Left cardiac atrium (tissue), 4 donors: ENCODE measurements at regions of chr13 and their contacts with region 1.

Region 1: GRCh38 chr13:32581177-32581786 is 5.0 kb upstream of the PDS5B start:
- DNase-seq: no peak
- ATAC-seq: no peak

Region 2: DNA sequence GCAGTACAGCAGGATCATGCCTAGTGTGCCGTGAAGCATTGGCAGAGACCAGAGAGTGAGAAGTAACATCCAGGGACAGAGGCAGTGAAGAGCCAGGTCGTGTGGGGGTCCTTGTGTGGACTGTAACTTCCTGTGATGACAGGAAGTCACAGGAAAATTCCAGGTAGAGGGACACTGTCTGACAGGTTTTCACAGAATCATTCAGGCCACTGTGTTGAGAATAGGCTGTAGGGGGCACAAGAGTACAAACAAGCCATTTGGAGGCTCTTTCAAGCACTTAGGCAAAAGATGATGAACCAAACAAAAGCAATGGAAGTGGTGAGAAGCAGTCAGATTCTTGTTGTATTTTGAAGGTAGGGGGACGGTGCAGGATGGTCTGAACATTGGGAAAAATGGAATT is 199.7 kb before region 1 on chr13:
- intact Hi-C with region 1: loop called in 1 of 2 experiments (anchors 5 kb)
- DNase-seq: no peak
- ATAC-seq: peak; percentile 59 to 61

Region 3: GRCh38 chr13:32472194-32472621 is 109.1 kb before region 1 on chr13:
- intact Hi-C with region 1: loop called in 1 of 2 experiments (anchors 10 kb)
- DNase-seq: no peak
- ATAC-seq: peak in 1 of 2 donors; percentile 20

Region 4: DNA sequence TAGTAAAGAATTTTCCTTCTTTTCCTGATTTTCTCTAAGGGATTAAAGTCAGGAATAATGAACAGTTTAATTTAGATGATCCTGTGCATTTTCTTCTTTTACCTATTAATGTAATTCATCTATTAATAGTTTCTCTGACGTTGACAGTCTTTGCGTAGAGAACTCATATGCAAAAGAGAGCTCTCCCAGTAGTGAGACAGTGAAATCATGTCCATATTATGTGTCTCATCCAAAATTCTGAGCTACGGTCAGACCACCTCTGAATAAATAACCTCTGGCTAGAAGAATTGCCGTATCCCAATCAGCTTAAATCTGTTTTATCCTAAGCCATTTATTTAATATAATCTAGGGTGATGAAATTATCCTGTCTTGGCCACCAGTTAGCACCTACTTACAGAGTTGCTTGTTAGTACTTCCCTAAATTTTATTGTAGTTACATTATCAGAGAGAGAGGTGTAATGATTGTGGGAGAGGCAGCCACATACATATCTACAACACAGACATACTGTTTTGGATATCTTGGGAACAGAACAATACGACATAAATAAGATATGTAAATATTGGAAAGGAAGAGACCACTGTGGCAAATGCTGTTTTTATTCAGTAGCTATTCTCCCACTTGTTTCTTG is 35.7 kb after region 1 on chr13:
- intact Hi-C with region 1: no loop called
- DNase-seq: no peak
- ATAC-seq: no peak